Endothelial cell of umbilical vein (primary cell): ENCODE measurements at regions of chr4 and their contacts with region 1.

Region 1: DNA sequence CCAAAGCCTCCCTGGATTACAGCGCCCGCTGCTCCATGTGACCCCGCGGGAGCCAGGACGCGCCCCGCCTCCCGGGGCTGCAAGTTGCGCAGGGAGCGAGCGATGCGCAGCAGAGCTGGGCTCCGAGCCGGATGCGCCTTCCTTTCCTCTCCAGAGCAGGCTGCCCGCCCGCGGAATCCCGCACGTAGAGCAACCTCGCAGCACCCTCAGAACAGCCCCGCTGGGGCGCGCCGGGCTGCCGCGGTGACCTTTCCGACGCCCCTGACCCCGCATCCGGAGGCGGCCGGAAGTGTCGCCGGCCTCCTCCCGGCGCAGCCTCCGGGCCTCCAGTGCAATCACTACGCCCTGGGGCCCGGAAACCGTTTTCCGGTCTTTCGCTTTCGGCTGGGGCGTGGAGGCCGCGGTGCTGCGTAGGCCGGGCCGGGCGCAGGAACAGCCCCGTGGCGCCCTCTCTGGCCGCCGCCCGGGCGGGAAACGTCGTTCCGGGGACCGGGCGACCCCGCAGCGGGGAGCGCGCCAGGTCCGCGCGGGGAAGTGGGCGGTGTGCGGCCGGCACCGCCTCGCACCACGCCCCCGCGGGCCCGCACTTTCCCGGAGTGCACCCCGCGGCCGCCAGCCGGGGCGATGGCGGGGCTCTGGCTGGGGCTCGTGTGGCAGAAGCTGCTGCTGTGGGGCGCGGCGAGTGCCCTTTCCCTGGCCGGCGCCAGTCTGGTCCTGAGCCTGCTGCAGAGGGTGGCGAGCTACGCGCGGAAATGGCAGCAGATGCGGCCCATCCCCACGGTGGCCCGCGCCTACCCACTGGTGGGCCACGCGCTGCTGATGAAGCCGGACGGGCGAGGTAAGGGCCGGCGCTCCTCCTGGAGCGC is at the start of gene CYP4V2:
- DNase-seq: peak; percentile 28
- H3K4me3 ChIP-seq: peak within 1 kb of the TSS; percentile 56 to 74 (median 68)
- H3K27ac ChIP-seq: no peak within 1 kb of the TSS
- H3K4me1 ChIP-seq: peaks cover 8% of the 10 kb centered on the region
- H3K27me3 ChIP-seq: peaks cover 4 to 6% of the 10 kb centered on the region in 2 experiments
- CTCF ChIP-seq: peak; percentile 24 to 31
- POLR2A ChIP-seq: no peak
- total RNA-seq, gene CYP4V2: 1.7 and 3.1 TPM in 2 replicates

Region 2: DNA sequence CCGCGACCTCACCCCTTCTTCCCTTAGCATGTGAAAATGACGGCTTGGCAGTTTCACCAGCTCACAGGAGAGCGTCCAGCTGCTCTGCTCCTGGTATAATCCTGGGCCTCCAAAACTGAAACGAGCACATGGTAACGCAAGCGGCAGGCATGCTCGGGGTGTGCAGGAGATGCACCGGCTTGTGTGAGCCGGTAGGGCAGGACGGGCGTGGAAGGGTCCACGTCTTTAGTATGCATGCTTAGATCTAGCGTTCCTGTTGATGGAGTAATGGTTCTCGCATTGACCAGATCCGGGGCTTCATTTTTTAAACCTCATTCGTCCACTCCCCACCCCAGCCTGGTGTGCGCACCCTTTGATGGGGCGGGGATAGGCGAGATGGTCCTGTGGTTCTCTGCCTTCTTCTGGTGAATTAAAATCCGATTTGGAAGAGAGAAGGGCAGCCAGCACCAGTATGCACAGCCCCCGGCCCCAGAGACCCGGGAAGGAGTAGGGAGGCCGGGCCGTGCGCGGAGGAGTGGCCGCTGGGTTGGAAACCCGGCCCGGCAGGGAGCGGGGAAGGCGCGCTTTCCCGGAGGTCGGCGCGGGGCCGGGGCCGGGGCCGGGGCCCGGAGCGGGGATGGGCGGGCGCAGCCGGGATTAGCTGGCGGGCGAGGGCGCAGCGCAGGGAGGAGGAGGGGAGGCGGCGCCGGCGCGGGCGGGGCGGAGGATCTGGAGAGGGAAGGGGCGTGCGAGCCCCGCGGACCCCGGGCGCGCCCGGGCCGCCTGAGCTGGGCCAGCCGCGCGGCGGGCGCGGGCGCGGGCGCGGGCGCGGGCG is 47.1 kb before region 1 on chr4:
- CTCF ChIA-PET with region 1: no interaction called
- POLR2A ChIA-PET with region 1: no interaction called
- dilution Hi-C with region 1: no loop called
- intact Hi-C with region 1: loop called (anchors 2 kb)
- DNase-seq: peak; percentile 11
- H3K4me3 ChIP-seq: peak overlapping the region; percentile 7 to 36 (median 31)
- H3K27ac ChIP-seq: no peak overlapping the region
- H3K4me1 ChIP-seq: peaks cover 10% of the 10 kb centered on the region
- H3K27me3 ChIP-seq: peaks cover 14 to 22% of the 10 kb centered on the region in 2 experiments
- CTCF ChIP-seq: peak in 1 of 2 donors; percentile 3
- POLR2A ChIP-seq: no peak

Region 3: DNA sequence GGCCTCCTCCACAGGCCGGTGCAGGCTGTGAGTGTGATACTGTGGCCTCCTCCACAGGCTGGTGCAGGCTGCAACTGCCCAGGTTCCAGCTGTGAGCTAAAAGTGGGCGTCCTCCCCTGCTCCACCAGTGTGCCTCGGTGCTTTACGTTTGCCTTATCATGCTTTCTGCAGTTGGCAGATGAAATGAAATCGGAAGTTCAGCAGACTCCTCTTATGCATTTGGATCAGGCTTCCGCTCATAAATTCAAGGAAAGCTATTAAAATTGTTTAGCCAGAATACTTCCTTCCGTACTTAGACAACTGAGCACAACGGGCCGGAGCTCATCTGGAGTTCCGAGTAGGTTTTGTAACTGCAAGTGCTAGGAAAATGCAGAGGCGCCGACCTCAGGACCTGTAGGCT is 12.0 kb after region 1 on chr4:
- CTCF ChIA-PET with region 1: interaction called, 9 read pairs
- POLR2A ChIA-PET with region 1: no interaction called
- dilution Hi-C with region 1: no loop called
- intact Hi-C with region 1: loop called (anchors 1 kb)
- DNase-seq: peak; percentile 23
- H3K4me3 ChIP-seq: no peak overlapping the region
- H3K27ac ChIP-seq: no peak overlapping the region
- H3K4me1 ChIP-seq: no peaks in the 10 kb centered on the region
- H3K27me3 ChIP-seq: no peaks in the 10 kb centered on the region
- CTCF ChIP-seq: no peak
- POLR2A ChIP-seq: no peak